ENCODE measurements at regions of chr11 and their contacts with region 1.

Region 1: DNA sequence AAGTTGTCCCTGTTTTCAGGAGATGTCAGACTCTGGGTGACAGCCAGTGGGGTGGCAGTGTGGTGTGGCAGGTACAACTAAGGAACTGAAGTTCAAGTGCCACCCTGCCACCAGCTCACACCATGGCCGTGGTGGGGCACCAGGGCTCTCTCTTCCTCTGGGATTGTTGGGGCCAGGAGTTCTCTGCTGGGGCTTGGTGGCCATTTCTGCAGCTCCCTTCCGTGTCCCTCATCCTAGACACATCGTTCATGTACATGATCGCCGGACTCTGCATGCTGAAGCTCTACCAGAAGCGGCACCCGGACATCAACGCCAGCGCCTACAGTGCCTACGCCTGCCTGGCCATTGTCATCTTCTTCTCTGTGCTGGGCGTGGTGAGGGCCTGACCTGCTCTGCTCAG is 7.5 kb upstream of the TAGLN start:
- DNase-seq: no peak
- H3K4me3 ChIP-seq: no peak overlapping the region
- H3K27ac ChIP-seq: no peak overlapping the region
- H3K4me1 ChIP-seq: no peaks in the 10 kb centered on the region
- H3K27me3 ChIP-seq: no peaks in the 10 kb centered on the region
- CTCF ChIP-seq: no peak

Region 2: GRCh38 chr11:116454020-116454645 is 737.5 kb before region 1 on chr11:
- CTCF ChIA-PET with region 1: no interaction called
- POLR2A ChIA-PET with region 1: no interaction called
- intact Hi-C with region 1: no loop called
- DNase-seq: peak; percentile 70
- H3K4me3 ChIP-seq: no peak overlapping the region
- H3K27ac ChIP-seq: no peak overlapping the region
- H3K4me1 ChIP-seq: no peaks in the 10 kb centered on the region
- H3K27me3 ChIP-seq: no peaks in the 10 kb centered on the region
- CTCF ChIP-seq: peak; percentile 74

Region 3: DNA sequence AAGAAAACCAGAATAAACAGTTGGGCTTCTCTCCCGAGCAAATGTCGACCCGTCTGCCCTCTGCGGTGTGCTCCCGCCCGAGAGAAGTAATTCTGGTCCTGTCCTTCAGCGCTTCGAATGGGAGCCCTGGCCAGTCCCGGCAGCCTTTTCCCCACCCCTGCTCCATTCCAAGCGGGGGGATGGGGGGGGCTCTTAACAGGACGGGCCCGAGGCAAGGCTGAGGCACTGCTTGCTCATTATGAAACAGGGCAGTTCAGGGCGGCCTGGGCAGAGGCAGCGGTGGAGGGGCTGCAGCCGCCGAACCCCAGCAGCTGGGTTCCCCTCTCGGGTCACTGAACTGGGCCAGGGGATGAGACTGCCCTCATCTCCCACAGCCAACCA is 108.6 kb after region 1 on chr11:
- CTCF ChIA-PET with region 1: interaction called, 10 read pairs
- POLR2A ChIA-PET with region 1: no interaction called
- intact Hi-C with region 1: no loop called
- DNase-seq: no peak
- H3K4me3 ChIP-seq: no peak overlapping the region
- H3K27ac ChIP-seq: peak overlapping the region; percentile 5
- H3K4me1 ChIP-seq: peaks cover 8% of the 10 kb centered on the region
- H3K27me3 ChIP-seq: no peaks in the 10 kb centered on the region
- CTCF ChIP-seq: no peak

Region 4: DNA sequence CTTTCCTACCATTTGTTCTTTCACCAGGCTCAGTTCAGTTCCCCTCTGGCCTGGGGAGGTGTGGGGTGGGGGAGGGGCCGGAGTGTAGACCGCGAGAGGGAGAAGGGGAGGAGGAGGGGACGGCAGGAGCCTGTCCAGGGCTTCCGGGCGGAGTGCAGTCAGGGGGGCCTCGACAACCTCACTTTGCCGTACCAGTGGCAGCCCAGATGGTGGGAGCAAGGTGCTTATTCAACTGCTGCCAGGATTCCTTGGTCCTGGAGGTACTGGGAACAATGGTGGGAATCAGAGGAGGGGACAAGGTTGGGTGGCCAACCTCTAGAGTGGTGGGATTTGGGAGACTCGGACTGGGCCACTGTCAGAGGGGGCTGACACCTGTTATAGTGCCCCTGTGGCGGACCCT is 123.2 kb after region 1 on chr11:
- CTCF ChIA-PET with region 1: no interaction called
- POLR2A ChIA-PET with region 1: no interaction called
- intact Hi-C with region 1: no loop called
- DNase-seq: no peak
- H3K4me3 ChIP-seq: peak overlapping the region; percentile 84
- H3K27ac ChIP-seq: no peak overlapping the region
- H3K4me1 ChIP-seq: peaks cover 3% of the 10 kb centered on the region
- H3K27me3 ChIP-seq: no peaks in the 10 kb centered on the region
- CTCF ChIP-seq: no peak

Measured in A673 (cell line).